Motor neuron (in vitro differentiated cells): ENCODE measurements at regions of chr7 and their contacts with region 1.

Region 1: GRCh38 chr7:36291387-36292316 is 98.0 kb upstream of the ANLN start:
- ATAC-seq: peak; percentile 95 to 99 (median 98)
- H3K4me3 ChIP-seq: no peak overlapping the region
- H3K27ac ChIP-seq: no peak overlapping the region
- H3K4me1 ChIP-seq: peaks cover 0 to 3% of the 10 kb centered on the region in 2 donors

Region 2: GRCh38 chr7:35985126-35985754 is 306.4 kb before region 1 on chr7:
- in situ Hi-C with region 1: loop called (anchors 5 to 25 kb)
- ATAC-seq: peak; percentile 75 to 99 (median 96)
- H3K4me3 ChIP-seq: no peak overlapping the region
- H3K27ac ChIP-seq: no peak overlapping the region
- H3K4me1 ChIP-seq: peaks cover 3 to 5% of the 10 kb centered on the region in 2 donors

Region 3: GRCh38 chr7:35993676-35994606 is 297.7 kb before region 1 on chr7:
- in situ Hi-C with region 1: loop called (anchors 5 to 25 kb)
- ATAC-seq: peak in 3 of 8 experiments; percentile 66 to 93 (median 86)
- H3K4me3 ChIP-seq: no peak overlapping the region
- H3K27ac ChIP-seq: no peak overlapping the region
- H3K4me1 ChIP-seq: peaks cover 1 to 2% of the 10 kb centered on the region in 2 donors

Region 4: DNA sequence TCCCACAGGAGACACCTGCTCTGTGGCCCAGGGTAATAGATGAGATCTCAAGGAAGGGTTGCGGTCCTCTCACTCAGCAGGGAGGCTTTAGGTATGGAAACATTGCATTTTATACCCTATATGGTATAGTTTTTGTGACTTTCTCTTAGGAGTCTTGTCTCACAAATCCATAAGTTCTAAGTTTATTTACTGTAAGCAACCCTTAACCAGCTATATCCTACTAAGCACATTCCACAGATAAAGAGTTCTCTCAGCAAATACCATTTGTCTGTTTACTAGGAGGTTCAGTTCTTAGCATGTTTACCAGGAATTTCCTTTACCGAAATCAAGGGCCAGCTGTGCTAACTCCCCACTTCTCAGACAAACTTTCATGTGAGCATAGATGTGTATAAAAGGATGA is 164.9 kb after region 1 on chr7:
- in situ Hi-C with region 1: no loop called
- ATAC-seq: no peak
- H3K4me3 ChIP-seq: no peak overlapping the region
- H3K27ac ChIP-seq: no peak overlapping the region
- H3K4me1 ChIP-seq: peaks cover 0 to 4% of the 10 kb centered on the region in 2 donors